ENCODE measurements at regions of chr4 and their contacts with region 1.

Region 1: GRCh38 chr4:158243071-158243470 is 32.8 kb downstream of the TMEM144 start:
- DNase-seq: no peak
- ATAC-seq: no peak

Region 2: GRCh38 chr4:158624889-158625478 is 381.9 kb after region 1 on chr4:
- intact Hi-C with region 1: loop called in 1 of 2 experiments (anchors 10 kb)
- DNase-seq: no peak
- ATAC-seq: peak; percentile 73

Measured in left colon (tissue), 2 donors.